MCF 10A (cell line): ENCODE measurements at regions of chr5 and their contacts with region 1.

Region 1: DNA sequence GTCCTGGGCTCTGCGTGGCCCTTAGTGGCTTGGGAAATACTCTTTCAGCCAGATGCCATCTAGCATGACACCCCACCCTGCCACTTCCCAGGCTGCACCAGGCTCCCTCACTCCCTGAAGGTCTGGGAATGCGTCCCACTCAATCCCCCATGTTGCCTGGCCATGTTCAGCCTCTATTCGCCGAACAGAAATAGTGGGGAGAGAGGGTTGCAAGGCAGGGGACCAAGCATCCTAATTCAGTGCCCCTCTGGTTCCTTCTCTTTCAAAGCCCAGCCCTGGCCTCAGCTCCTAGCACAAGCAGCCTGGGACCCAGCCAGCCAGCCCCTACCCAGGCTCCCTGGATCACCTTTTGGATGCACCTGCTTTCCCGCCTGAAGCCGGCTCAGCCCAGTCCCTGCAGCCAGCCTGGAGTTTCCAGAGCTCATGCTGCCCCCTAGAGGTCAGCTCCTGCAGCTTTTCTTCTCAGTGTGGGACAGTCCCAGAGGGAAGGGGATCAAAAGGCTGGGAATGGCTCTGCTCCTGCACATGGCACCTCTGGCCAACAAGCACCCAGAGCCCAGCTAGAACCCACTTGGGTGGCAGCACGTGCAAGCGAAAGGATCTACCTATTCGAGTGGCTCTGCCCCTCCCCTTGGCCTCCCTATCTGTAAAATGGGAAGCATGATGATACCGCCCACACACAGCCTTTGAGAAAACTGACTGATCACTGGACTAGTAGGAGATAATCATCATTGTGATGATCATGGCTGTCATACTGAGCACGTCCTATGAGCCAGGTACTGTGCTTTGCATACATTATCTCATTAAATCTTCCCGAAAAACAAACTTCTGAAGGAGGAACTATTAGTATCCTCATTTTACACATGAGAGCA is 48.7 kb upstream of the C5orf58 start:
- DNase-seq: peak; percentile 85
- H3K4me3 Mint-ChIP-seq: no peak overlapping the region
- H3K27ac Mint-ChIP-seq: no peak overlapping the region
- H3K4me1 Mint-ChIP-seq: no peaks in the 10 kb centered on the region
- H3K27me3 Mint-ChIP-seq: no peaks in the 10 kb centered on the region
- CTCF ChIP-seq: peak; percentile 89

Region 2: DNA sequence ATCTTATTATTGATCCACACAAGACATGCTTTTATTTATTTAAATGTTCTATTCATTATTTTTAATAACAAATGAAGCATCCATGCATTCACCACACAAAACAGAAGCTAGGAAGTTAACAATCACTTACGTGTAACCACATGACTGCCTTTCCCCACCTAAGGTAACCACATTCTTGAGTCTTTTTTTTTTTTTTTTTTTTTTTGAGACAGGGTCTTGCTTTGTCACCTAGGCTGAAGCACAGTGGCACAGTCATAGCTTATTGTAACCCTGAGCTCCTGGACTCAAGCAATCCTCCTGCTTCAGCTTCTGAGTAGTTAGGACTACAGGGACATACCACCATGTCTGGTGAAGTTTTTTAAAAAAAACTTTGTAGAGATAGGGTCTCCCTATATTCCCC is 413.9 kb before region 1 on chr5:
- CTCF ChIA-PET with region 1: no interaction called
- POLR2A ChIA-PET with region 1: no interaction called
- intact Hi-C with region 1: no loop called
- DNase-seq: no peak
- H3K4me3 Mint-ChIP-seq: no peak overlapping the region
- H3K27ac Mint-ChIP-seq: no peak overlapping the region
- H3K4me1 Mint-ChIP-seq: peaks cover 2% of the 10 kb centered on the region
- H3K27me3 Mint-ChIP-seq: no peaks in the 10 kb centered on the region
- CTCF ChIP-seq: no peak

Region 3: GRCh38 chr5:170070556-170071412 is 113.3 kb before region 1 on chr5:
- CTCF ChIA-PET with region 1: interaction called, 11 read pairs
- POLR2A ChIA-PET with region 1: no interaction called
- intact Hi-C with region 1: no loop called
- DNase-seq: peak; percentile 60
- H3K4me3 Mint-ChIP-seq: no peak overlapping the region
- H3K27ac Mint-ChIP-seq: no peak overlapping the region
- H3K4me1 Mint-ChIP-seq: no peaks in the 10 kb centered on the region
- H3K27me3 Mint-ChIP-seq: peaks cover 31% of the 10 kb centered on the region
- CTCF ChIP-seq: peak; percentile 81

Region 4: DNA sequence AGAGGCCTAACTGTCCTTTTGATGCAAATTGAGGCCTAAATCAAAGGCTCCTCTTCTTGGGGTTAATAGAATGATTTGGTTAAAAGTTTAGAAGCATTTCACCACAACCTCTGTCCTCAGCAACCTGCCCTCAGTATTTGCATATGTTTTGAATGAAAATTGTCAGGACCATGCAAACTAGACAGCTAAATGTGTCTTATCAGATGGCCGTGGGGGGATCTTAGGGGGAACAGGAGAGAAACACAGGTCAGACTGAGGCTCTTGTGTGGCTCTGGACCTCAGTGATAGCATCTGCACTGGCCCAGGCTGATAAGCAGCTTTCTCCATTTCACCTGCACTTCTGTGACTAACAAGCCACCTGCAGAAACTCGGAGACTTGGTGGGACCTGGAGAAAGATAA is 29.3 kb before region 1 on chr5:
- CTCF ChIA-PET with region 1: interaction called, 10 read pairs
- POLR2A ChIA-PET with region 1: no interaction called
- intact Hi-C with region 1: no loop called
- DNase-seq: no peak
- H3K4me3 Mint-ChIP-seq: no peak overlapping the region
- H3K27ac Mint-ChIP-seq: no peak overlapping the region
- H3K4me1 Mint-ChIP-seq: peaks cover 12% of the 10 kb centered on the region
- H3K27me3 Mint-ChIP-seq: no peaks in the 10 kb centered on the region
- CTCF ChIP-seq: no peak

Region 5: DNA sequence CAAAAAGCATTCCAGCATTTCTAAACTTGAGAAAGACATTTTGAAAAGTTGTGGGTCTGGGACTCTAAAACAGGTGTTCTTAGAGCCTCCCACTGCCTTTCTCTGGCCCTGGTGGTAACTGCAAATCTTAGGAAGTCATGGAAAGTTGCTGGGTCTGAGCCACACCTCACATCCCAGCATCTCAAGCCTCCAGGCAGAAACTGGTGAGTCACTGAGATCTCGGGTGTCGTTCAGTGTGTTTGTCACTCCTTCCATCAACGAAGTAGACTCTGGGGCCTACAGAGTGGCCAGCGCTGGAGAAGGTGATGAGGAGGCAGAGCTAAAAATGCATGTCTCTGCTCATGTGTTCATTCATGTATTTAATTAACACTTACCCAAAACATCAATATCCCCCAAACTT is 10.8 kb before region 1 on chr5:
- CTCF ChIA-PET with region 1: interaction called, 97 read pairs
- POLR2A ChIA-PET with region 1: interaction called, 4 read pairs
- intact Hi-C with region 1: no loop called
- DNase-seq: peak; percentile 85
- H3K4me3 Mint-ChIP-seq: no peak overlapping the region
- H3K27ac Mint-ChIP-seq: no peak overlapping the region
- H3K4me1 Mint-ChIP-seq: peaks cover 7% of the 10 kb centered on the region
- H3K27me3 Mint-ChIP-seq: no peaks in the 10 kb centered on the region
- CTCF ChIP-seq: no peak

Region 6: DNA sequence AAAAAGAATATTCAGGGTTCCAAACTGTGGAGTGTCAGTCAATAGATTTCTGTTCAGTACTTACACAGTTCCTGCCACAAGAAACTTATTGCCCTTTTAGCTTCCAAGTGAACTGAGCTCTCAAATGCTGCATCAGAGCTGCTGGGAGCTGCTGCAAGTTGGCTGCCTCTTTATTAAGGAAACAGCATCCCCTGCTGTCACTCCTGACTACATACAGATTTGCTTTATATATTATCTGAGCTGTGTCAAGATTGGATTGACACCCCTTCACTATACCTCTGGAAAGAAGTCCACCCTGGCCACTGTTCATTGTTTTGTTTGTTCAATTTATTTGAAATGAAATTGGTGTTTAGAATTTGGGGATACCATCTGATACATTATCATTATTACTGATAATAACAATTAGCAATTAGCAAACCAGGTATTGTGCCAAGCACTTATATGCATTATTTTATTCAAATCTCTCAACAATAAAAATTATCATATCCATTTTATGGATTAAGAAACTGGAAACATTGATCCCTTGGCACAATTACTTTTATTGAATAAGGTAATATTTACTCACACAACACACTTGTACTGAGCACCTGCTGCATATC is 32.3 kb after region 1 on chr5:
- CTCF ChIA-PET with region 1: interaction called, 8 read pairs
- POLR2A ChIA-PET with region 1: no interaction called
- intact Hi-C with region 1: loop called (anchors 5 kb)
- DNase-seq: peak; percentile 68
- H3K4me3 Mint-ChIP-seq: no peak overlapping the region
- H3K27ac Mint-ChIP-seq: no peak overlapping the region
- H3K4me1 Mint-ChIP-seq: peaks cover 6% of the 10 kb centered on the region
- H3K27me3 Mint-ChIP-seq: no peaks in the 10 kb centered on the region
- CTCF ChIP-seq: peak; percentile 76